OCI-LY7 (cell line): ENCODE measurements at regions of chr12 and their contacts with region 1.

Region 1: DNA sequence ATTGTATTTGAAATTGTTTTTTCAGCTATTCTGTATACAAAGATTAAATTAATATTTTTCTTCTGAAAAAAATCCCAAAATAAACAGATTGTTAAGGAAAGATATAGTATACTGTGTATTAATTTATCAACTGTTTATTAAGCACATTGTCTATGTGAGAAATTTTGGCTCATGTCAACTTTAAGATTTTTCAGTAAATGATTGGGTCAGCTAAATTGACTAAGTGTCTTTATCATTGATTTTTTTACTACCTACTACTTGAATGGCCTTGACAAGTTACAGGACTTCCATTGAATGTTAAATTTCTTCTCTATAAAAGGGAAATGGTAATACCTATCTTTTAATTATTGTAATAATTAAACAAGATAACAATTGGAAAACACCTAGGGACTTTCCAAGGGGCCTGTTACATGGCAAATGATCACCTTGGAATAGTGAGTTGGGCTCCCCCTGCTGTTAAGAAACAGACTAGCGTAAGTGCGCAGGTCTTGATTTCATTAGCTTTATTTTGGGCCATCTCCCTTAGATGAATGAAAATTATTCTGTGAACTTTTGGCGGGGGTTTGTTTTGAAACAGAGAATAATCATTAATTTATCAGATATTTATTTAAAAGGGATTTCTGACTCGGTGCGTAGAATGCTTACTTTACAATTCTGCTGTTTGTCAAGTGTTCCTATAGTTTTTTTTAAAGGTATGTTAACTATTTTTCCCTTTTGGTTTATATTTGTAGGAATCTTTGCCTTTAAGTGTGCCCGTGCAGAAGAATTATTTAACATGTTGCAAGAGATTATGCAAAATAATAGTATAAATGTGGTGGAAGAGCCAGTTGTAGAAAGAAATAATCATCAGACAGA is 14.5 kb upstream of the CCT2 start:
- DNase-seq: peak; percentile 75
- H3K4me3 ChIP-seq: no peak overlapping the region
- H3K27ac ChIP-seq: no peak overlapping the region
- H3K4me1 ChIP-seq: no peaks in the 10 kb centered on the region
- CTCF ChIP-seq: peak; percentile 96

Region 2: GRCh38 chr12:69290545-69291277 is 280.1 kb before region 1 on chr12:
- CTCF ChIA-PET with region 1: interaction called, 3 read pairs
- POLR2A ChIA-PET with region 1: no interaction called
- intact Hi-C with region 1: loop called (anchors 2 kb)
- DNase-seq: peak; percentile 87
- H3K4me3 ChIP-seq: no peak overlapping the region
- H3K27ac ChIP-seq: no peak overlapping the region
- H3K4me1 ChIP-seq: no peaks in the 10 kb centered on the region
- CTCF ChIP-seq: peak; percentile 99

Region 3: GRCh38 chr12:69415471-69416275 is 155.1 kb before region 1 on chr12:
- CTCF ChIA-PET with region 1: no interaction called
- POLR2A ChIA-PET with region 1: no interaction called
- intact Hi-C with region 1: loop called (anchors 5 kb)
- DNase-seq: peak; percentile 48
- H3K4me3 ChIP-seq: no peak overlapping the region
- H3K27ac ChIP-seq: no peak overlapping the region
- H3K4me1 ChIP-seq: no peaks in the 10 kb centered on the region
- CTCF ChIP-seq: peak; percentile 75

Region 4: GRCh38 chr12:69470189-69471075 is 100.3 kb before region 1 on chr12 and contains the start of gene FRS2:
- CTCF ChIA-PET with region 1: no interaction called
- POLR2A ChIA-PET with region 1: no interaction called
- intact Hi-C with region 1: loop called (anchors 1 kb)
- DNase-seq: peak; percentile 86
- H3K4me3 ChIP-seq: peak within 1 kb of the TSS; percentile 98
- H3K27ac ChIP-seq: peak within 1 kb of the TSS; percentile 55
- H3K4me1 ChIP-seq: peaks cover 43% of the 10 kb centered on the region
- CTCF ChIP-seq: peak; percentile 65
- total RNA-seq, gene FRS2: 9.9 and 18.5 TPM in 2 replicates

Region 5: DNA sequence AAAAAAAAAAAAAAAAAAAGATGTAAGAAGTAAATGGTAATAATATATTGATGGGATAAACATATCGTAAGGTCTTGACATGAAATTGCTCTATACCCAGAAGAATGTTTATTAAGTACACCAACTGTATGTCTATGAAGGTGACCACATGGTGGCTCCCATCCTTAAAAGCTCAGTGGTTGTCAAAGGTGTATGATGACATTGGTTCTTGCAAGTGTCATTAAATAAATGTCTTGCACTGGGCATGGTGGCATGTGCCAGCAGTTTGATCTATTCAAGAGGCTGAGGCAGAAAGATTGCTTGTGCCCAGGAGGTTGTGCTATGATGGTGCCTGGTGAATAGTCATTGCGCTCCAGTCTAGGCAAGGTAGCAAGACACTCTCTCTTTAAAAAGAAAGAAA is 24.9 kb after region 1 on chr12:
- CTCF ChIA-PET with region 1: no interaction called
- POLR2A ChIA-PET with region 1: no interaction called
- intact Hi-C with region 1: no loop called
- DNase-seq: no peak
- H3K4me3 ChIP-seq: no peak overlapping the region
- H3K27ac ChIP-seq: no peak overlapping the region
- H3K4me1 ChIP-seq: no peaks in the 10 kb centered on the region
- CTCF ChIP-seq: 0 out of 2 replicates have a peak, but pooled peaks have one; percentile 10

Region 6: DNA sequence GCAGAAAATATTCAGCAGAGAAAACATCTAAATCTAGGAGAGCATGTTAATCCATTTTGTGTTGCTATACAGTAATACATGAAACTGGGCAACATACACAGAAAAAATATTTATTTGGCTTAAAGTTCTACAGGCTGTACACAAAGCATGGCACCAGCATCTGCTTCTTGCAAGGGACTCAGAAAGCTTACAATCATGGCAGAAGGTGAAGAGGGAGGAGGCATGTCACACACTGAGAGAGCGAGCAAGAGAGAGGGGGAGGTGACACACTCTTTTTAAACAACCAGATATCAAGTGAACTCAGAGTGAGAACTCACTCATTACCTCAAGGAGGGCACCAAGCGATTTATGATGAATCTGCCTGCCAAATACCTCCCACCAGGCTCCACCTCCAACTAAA is 578.2 kb after region 1 on chr12:
- CTCF ChIA-PET with region 1: no interaction called
- POLR2A ChIA-PET with region 1: no interaction called
- intact Hi-C with region 1: no loop called
- DNase-seq: no peak
- H3K4me3 ChIP-seq: no peak overlapping the region
- H3K27ac ChIP-seq: no peak overlapping the region
- H3K4me1 ChIP-seq: no peaks in the 10 kb centered on the region
- CTCF ChIP-seq: no peak